MCF 10A (cell line): ENCODE measurements at regions of chr1 and their contacts with region 1.

Region 1: GRCh38 chr1:152167835-152168519 is 8.9 kb upstream of the RPTN start:
- DNase-seq: peak; percentile 100
- H3K4me3 Mint-ChIP-seq: peak overlapping the region; percentile 49
- H3K27ac Mint-ChIP-seq: peak overlapping the region; percentile 99
- H3K4me1 Mint-ChIP-seq: peaks cover 70% of the 10 kb centered on the region
- H3K27me3 Mint-ChIP-seq: no peaks in the 10 kb centered on the region
- CTCF ChIP-seq: no peak

Region 2: GRCh38 chr1:152110860-152111514 is 57.0 kb before region 1 on chr1:
- CTCF ChIA-PET with region 1: interaction called, 5 read pairs
- POLR2A ChIA-PET with region 1: interaction called, 12 read pairs
- intact Hi-C with region 1: no loop called
- DNase-seq: peak; percentile 71
- H3K4me3 Mint-ChIP-seq: no peak overlapping the region
- H3K27ac Mint-ChIP-seq: no peak overlapping the region
- H3K4me1 Mint-ChIP-seq: no peaks in the 10 kb centered on the region
- H3K27me3 Mint-ChIP-seq: no peaks in the 10 kb centered on the region
- CTCF ChIP-seq: no peak

Region 3: DNA sequence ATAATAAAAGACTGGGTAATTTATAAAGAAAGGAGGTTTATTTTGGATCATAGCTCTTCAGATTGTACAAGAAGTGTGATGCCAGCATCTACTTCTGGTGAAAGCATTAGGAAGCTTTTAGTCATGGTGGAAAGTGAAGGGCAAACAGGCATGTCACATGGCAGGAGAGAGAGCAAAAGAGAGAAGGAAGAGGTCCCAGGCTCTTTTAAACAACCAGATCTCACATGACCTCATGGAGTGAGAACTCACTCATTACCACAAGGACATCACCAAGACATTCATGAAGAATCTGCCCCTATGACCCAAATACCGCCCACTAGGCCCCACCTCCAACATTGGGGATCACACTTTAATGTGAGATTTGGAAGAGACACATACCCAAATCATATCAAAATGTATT is 19.0 kb before region 1 on chr1:
- CTCF ChIA-PET with region 1: interaction called, 4 read pairs
- POLR2A ChIA-PET with region 1: interaction called, 171 read pairs
- intact Hi-C with region 1: no loop called
- DNase-seq: no peak
- H3K4me3 Mint-ChIP-seq: no peak overlapping the region
- H3K27ac Mint-ChIP-seq: no peak overlapping the region
- H3K4me1 Mint-ChIP-seq: no peaks in the 10 kb centered on the region
- H3K27me3 Mint-ChIP-seq: no peaks in the 10 kb centered on the region
- CTCF ChIP-seq: no peak

Region 4: DNA sequence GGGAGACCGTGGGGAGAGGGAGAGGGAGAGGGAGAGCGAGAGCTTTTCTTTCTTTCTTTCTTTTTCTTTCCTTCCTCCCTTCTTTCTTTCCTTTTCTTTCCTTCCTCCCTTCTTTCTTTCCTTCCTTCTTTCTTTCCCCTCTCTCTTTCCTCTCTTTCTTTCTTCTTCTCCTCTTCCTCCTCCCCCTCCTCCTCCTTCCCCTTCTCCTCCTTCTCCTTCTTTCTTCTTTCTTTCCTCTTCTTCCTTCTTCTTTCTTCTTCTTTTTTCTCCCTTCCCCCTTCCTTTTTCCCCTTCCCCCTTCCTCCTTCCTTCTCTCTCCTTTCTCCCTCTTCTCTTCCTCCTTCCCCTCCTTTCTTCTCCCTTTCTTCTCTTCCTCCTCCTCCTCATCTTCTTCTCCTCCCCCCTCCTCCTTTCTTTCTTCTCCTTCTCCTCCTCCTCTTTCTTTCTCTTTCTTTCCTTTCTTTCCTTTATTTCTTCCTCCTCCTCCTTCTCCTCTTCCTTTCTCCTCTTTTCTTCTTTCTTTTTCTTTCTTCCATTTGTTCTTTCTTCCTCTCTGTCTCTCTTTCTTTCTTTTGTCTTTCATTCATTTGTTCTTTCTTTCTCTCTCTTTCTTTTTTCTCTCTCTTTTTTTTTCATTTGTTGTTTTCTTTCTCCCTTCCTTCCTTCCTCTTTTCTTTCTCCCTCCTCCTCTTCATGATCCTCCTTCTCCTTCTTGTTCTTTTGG is 29.4 kb after region 1 on chr1:
- CTCF ChIA-PET with region 1: no interaction called
- POLR2A ChIA-PET with region 1: no interaction called
- intact Hi-C with region 1: no loop called
- DNase-seq: no peak
- H3K4me3 Mint-ChIP-seq: peak overlapping the region; percentile 4
- H3K27ac Mint-ChIP-seq: peak overlapping the region; percentile 52
- H3K4me1 Mint-ChIP-seq: no peaks in the 10 kb centered on the region
- H3K27me3 Mint-ChIP-seq: peaks cover 35% of the 10 kb centered on the region
- CTCF ChIP-seq: no peak

Region 5: GRCh38 chr1:153250166-153250565 is 1082.2 kb after region 1 on chr1:
- CTCF ChIA-PET with region 1: no interaction called
- POLR2A ChIA-PET with region 1: no interaction called
- intact Hi-C with region 1: no loop called
- DNase-seq: no peak
- H3K4me3 Mint-ChIP-seq: no peak overlapping the region
- H3K27ac Mint-ChIP-seq: no peak overlapping the region
- H3K4me1 Mint-ChIP-seq: no peaks in the 10 kb centered on the region
- H3K27me3 Mint-ChIP-seq: peaks cover 62% of the 10 kb centered on the region
- CTCF ChIP-seq: no peak